ENCODE measurements at regions of chr14 and their contacts with region 1.

Region 1: GRCh38 chr14:64338616-64339316 is 44.6 kb upstream of the ESR2 start:
- DNase-seq: peak; percentile 76
- ATAC-seq: peak; percentile 87
- H3K4me3 Mint-ChIP-seq: peak overlapping the region; percentile 94
- H3K27ac Mint-ChIP-seq: peak overlapping the region; percentile 94
- H3K4me1 Mint-ChIP-seq: peaks cover 31% of the 10 kb centered on the region
- H3K27me3 Mint-ChIP-seq: no peaks in the 10 kb centered on the region
- CTCF ChIP-seq: no peak

Region 2: GRCh38 chr14:63543000-63543825 is 795.6 kb before region 1 on chr14 and contains the start of gene PPP2R5E:
- CTCF ChIA-PET with region 1: no interaction called
- POLR2A ChIA-PET with region 1: no interaction called
- intact Hi-C with region 1: loop called (anchors 10 kb)
- DNase-seq: peak; percentile 87
- ATAC-seq: peak; percentile 96
- H3K4me3 Mint-ChIP-seq: peak within 1 kb of the TSS; percentile 97
- H3K27ac Mint-ChIP-seq: peak within 1 kb of the TSS; percentile 92
- H3K4me1 Mint-ChIP-seq: peaks cover 34% of the 10 kb centered on the region
- H3K27me3 Mint-ChIP-seq: no peaks in the 10 kb centered on the region
- CTCF ChIP-seq: no peak
- total RNA-seq, gene PPP2R5E: 40.0 and 44.8 TPM in 2 replicates

Region 3: GRCh38 chr14:64387694-64388532 is 49.1 kb after region 1 on chr14 and contains the start of gene MTHFD1:
- CTCF ChIA-PET with region 1: no interaction called
- POLR2A ChIA-PET with region 1: interaction called, 30 read pairs
- intact Hi-C with region 1: loop called (anchors 1 kb)
- DNase-seq: peak; percentile 93
- ATAC-seq: peak; percentile 79
- H3K4me3 Mint-ChIP-seq: peak within 1 kb of the TSS; percentile 94
- H3K27ac Mint-ChIP-seq: peak within 1 kb of the TSS; percentile 94
- H3K4me1 Mint-ChIP-seq: peaks cover 52% of the 10 kb centered on the region
- H3K27me3 Mint-ChIP-seq: no peaks in the 10 kb centered on the region
- CTCF ChIP-seq: no peak
- total RNA-seq, gene MTHFD1: 91.4 and 98.4 TPM in 2 replicates

Region 4: GRCh38 chr14:64465191-64465822 is 126.5 kb after region 1 on chr14 and contains the start of gene AKAP5:
- CTCF ChIA-PET with region 1: interaction called, 11 read pairs
- POLR2A ChIA-PET with region 1: interaction called, 4 read pairs
- intact Hi-C with region 1: no loop called
- DNase-seq: peak; percentile 67
- ATAC-seq: peak; percentile 91
- H3K4me3 Mint-ChIP-seq: peak within 1 kb of the TSS; percentile 86
- H3K27ac Mint-ChIP-seq: peak within 1 kb of the TSS; percentile 80
- H3K4me1 Mint-ChIP-seq: peaks cover 51% of the 10 kb centered on the region
- H3K27me3 Mint-ChIP-seq: no peaks in the 10 kb centered on the region
- CTCF ChIP-seq: no peak
- total RNA-seq, gene AKAP5: 4.3 and 5.1 TPM in 2 replicates

Region 5: GRCh38 chr14:64540208-64541157 is 201.7 kb after region 1 on chr14 and contains the start of gene HSPA2:
- CTCF ChIA-PET with region 1: no interaction called
- POLR2A ChIA-PET with region 1: interaction called, 17 read pairs
- intact Hi-C with region 1: loop called (anchors 1 kb)
- DNase-seq: peak; percentile 93
- ATAC-seq: peak; percentile 90
- H3K4me3 Mint-ChIP-seq: peak within 1 kb of the TSS; percentile 100
- H3K27ac Mint-ChIP-seq: peak within 1 kb of the TSS; percentile 96
- H3K4me1 Mint-ChIP-seq: peaks cover 33% of the 10 kb centered on the region
- H3K27me3 Mint-ChIP-seq: peaks cover 2% of the 10 kb centered on the region
- CTCF ChIP-seq: no peak
- total RNA-seq, gene HSPA2: 3.8 and 5.4 TPM in 2 replicates

Region 6: GRCh38 chr14:64764641-64765520 is 426.1 kb after region 1 on chr14:
- CTCF ChIA-PET with region 1: no interaction called
- POLR2A ChIA-PET with region 1: no interaction called
- intact Hi-C with region 1: loop called (anchors 5 kb)
- DNase-seq: peak; percentile 49
- ATAC-seq: peak; percentile 66
- H3K4me3 Mint-ChIP-seq: peak overlapping the region; percentile 59
- H3K27ac Mint-ChIP-seq: no peak overlapping the region
- H3K4me1 Mint-ChIP-seq: peaks cover 14% of the 10 kb centered on the region
- H3K27me3 Mint-ChIP-seq: peaks cover 15% of the 10 kb centered on the region
- CTCF ChIP-seq: no peak

Region 7: DNA sequence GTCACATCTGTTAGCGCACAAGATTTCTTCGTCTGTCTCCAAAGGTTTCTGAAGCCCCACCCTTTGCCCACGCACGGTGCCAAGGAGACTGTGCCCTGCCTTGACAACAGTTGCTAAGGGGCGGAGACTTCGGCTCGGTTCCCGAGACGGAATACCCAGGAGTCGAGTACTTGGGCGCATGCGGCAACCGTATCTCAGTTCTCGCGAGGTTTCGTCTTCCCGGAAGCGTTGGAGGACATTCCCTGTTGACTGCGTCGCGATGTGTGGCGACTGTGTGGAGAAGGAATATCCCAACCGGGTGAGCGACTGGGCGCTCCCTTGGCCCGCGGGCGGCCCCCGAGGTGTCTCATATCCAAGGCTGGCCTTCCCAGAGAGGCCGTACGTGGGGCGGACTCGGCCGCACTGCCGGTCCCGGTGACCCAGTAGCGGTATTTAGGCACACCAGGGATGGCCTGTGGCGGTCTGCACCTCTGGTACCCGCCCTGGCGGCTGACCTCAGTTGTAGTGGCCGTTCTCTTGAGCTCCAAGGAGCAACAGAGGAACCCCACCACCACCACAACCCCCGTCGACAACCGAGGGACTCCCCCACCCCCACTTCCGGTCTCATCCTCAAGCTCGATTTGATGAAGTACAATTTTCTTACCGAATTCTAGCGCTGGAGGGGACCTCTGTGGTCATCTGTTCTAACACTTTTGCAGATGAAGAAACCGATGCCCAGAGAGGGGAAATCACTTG is 575.6 kb after region 1 on chr14 and contains the start of gene CHURC1:
- CTCF ChIA-PET with region 1: no interaction called
- POLR2A ChIA-PET with region 1: no interaction called
- intact Hi-C with region 1: loop called (anchors 10 kb)
- DNase-seq: peak; percentile 89
- ATAC-seq: peak; percentile 98
- H3K4me3 Mint-ChIP-seq: peak within 1 kb of the TSS; percentile 92
- H3K27ac Mint-ChIP-seq: peak within 1 kb of the TSS; percentile 88
- H3K4me1 Mint-ChIP-seq: peaks cover 43% of the 10 kb centered on the region
- H3K27me3 Mint-ChIP-seq: peaks cover 3% of the 10 kb centered on the region
- CTCF ChIP-seq: no peak
- total RNA-seq, gene CHURC1: 69.6 and 83.8 TPM in 2 replicates

Measured in activated B cell treated with CpG ODN at 0.5 μM for 24 hours (primary cell).